ENCODE measurements at regions of chr16 and their contacts with region 1.

Region 1: DNA sequence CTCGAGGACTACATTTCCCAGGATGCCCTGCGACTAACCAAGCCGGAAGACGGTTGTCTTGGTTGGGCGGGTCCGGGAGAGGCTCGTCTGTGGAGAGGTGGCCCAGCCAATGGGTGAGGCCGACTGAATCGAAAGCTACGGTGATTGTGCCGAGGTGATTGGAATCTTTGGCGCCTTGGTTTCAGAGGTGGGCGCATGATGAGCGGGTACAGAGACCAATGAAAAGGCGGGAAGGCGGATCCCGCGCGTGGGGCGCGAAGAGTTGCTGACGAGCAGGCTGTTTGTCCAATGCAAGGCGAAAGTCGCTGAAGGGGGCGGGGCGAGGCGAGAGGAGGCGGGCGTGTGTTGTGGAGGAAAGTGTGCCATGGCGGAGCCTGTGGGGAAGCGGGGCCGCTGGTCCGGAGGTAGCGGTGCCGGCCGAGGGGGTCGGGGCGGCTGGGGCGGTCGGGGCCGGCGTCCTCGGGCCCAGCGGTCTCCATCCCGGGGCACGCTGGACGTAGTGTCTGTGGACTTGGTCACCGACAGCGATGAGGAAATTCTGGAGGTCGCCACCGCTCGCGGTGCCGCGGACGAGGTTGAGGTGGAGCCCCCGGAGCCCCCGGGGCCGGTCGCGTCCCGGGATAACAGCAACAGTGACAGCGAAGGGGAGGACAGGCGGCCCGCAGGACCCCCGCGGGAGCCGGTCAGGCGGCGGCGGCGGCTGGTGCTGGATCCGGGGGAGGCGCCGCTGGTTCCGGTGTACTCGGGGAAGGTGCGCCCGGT is at the start of gene NFATC2IP:
- DNase-seq: peak; percentile 100
- ATAC-seq: peak; percentile 93
- H3K4me3 ChIP-seq: peak within 1 kb of the TSS; percentile 85 to 94
- H3K27ac ChIP-seq: peak within 1 kb of the TSS; percentile 72
- H3K4me1 ChIP-seq: peaks cover 6 to 31% of the 10 kb centered on the region in 2 experiments
- H3K27me3 ChIP-seq: no peaks in the 10 kb centered on the region
- CTCF ChIP-seq: no peak
- POLR2A ChIP-seq: no peak
- RAD21 ChIP-seq: no peak
- total RNA-seq, gene NFATC2IP: 41.4 TPM

Region 2: GRCh38 chr16:28935924-28936783 is 14.7 kb before region 1 on chr16:
- CTCF ChIA-PET with region 1: interaction called, 10 read pairs
- POLR2A ChIA-PET with region 1: interaction called, 4 read pairs
- RAD21 ChIA-PET with region 1: no interaction called
- intact Hi-C with region 1: no loop called
- DNase-seq: peak; percentile 69
- ATAC-seq: peak; percentile 99
- H3K4me3 ChIP-seq: peak overlapping the region in 1 of 2 experiments; percentile 39; a peak in 3 of 4 replicates
- H3K27ac ChIP-seq: no peak overlapping the region
- H3K4me1 ChIP-seq: peaks cover 4 to 19% of the 10 kb centered on the region in 2 experiments; a peak in 3 of 4 replicates
- H3K27me3 ChIP-seq: no peaks in the 10 kb centered on the region
- CTCF ChIP-seq: no peak
- POLR2A ChIP-seq: no peak
- RAD21 ChIP-seq: no peak